B cell (primary cell): ENCODE measurements at regions of chr1 and their contacts with region 1.

Region 1: GRCh38 chr1:114282751-114283403 is 129.2 kb upstream of the SYT6 start:
- DNase-seq: peak; percentile 76
- ATAC-seq: peak; percentile 71
- H3K4me3 ChIP-seq: no peak overlapping the region
- H3K4me3 Mint-ChIP-seq: no peak overlapping the region
- H3K27ac ChIP-seq: no peak overlapping the region
- H3K27ac Mint-ChIP-seq: no peak overlapping the region
- H3K4me1 ChIP-seq: no peaks in the 10 kb centered on the region
- H3K4me1 Mint-ChIP-seq: no peaks in the 10 kb centered on the region
- H3K27me3 ChIP-seq: peaks cover 0 to 2% (median 0%) of the 10 kb centered on the region in 4 experiments
- H3K27me3 Mint-ChIP-seq: no peaks in the 10 kb centered on the region
- CTCF ChIP-seq: peak; percentile 91

Region 2: DNA sequence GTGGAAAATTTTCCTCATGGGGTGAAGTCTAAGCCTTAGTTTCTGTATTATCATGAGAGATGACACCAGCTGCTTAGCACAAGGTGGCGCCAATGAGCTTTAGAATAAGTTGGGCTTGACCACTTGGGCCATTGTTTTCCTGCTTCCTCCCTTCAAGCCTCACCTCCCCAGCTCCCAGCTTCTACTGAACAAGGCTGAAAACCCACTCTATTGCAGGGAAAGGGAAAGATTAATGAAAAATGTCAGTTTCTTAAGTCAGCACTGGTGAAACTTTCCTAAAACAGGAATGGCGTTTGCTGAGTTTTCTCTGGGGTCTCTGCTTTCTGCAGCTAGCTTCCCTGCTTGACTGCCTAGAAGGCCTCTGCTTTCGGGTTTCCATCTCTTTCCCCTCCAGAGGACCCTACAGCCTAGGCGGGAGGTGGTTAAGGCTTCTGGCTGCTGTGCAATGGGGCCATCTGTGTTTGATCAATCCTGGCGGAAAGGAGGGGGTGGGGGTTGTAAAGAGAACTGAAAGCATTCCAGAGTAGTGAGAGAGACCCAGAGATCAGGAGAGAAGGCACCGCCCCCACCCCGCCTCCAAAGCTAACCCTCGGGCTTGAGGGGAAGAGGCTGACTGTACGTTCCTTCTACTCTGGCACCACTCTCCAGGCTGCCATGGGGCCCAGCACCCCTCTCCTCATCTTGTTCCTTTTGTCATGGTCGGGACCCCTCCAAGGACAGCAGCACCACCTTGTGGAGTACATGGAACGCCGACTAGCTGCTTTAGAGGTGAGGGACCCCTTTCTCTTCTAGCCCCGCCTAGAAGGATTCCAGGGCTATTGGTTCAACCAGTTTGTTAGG is 303.8 kb before region 1 on chr1 and contains the start of gene OLFML3:
- CTCF ChIA-PET with region 1: interaction called, 37 read pairs
- POLR2A ChIA-PET with region 1: no interaction called
- intact Hi-C with region 1: no loop called
- DNase-seq: peak; percentile 54
- ATAC-seq: no peak
- H3K4me3 ChIP-seq: no peak within 1 kb of the TSS
- H3K4me3 Mint-ChIP-seq: no peak within 1 kb of the TSS
- H3K27ac ChIP-seq: no peak within 1 kb of the TSS
- H3K27ac Mint-ChIP-seq: no peak within 1 kb of the TSS
- H3K4me1 ChIP-seq: no peaks in the 10 kb centered on the region
- H3K4me1 Mint-ChIP-seq: peaks cover 11% of the 10 kb centered on the region
- H3K27me3 ChIP-seq: no peaks in the 10 kb centered on the region
- H3K27me3 Mint-ChIP-seq: no peaks in the 10 kb centered on the region
- CTCF ChIP-seq: peak; percentile 60
- total RNA-seq, gene OLFML3: 0.32 and 0.61 TPM in 2 replicates

Region 3: DNA sequence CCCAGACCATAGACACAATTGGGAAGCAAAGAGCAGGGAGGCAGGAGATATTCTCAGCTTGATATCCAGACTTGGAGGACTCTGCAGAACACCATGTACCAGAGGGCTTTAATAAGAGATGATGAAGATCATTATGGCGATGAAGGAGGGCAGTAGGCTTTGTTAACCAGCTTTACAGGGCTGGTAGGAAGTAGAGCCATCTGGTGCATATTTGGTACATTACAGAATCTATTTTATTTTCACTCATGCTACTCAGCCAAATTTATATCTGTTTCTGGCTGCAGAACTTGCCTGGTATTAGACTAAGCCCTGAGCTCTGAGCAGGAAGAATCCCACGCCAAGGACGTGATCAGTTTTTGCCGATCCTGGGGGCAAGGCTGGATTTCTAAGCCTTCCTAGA is 67.4 kb before region 1 on chr1:
- CTCF ChIA-PET with region 1: no interaction called
- POLR2A ChIA-PET with region 1: no interaction called
- intact Hi-C with region 1: no loop called
- DNase-seq: no peak
- ATAC-seq: no peak
- H3K4me3 ChIP-seq: no peak overlapping the region
- H3K4me3 Mint-ChIP-seq: no peak overlapping the region
- H3K27ac ChIP-seq: no peak overlapping the region
- H3K27ac Mint-ChIP-seq: no peak overlapping the region
- H3K4me1 ChIP-seq: no peaks in the 10 kb centered on the region
- H3K4me1 Mint-ChIP-seq: peaks cover 2% of the 10 kb centered on the region
- H3K27me3 ChIP-seq: peaks cover 0 to 2% (median under 1%) of the 10 kb centered on the region in 4 experiments
- H3K27me3 Mint-ChIP-seq: peaks cover 36% of the 10 kb centered on the region
- CTCF ChIP-seq: no peak

Region 4: GRCh38 chr1:114270282-114270681 is 12.6 kb before region 1 on chr1:
- CTCF ChIA-PET with region 1: interaction called, 48 read pairs
- POLR2A ChIA-PET with region 1: no interaction called
- intact Hi-C with region 1: no loop called
- DNase-seq: no peak
- ATAC-seq: no peak
- H3K4me3 ChIP-seq: no peak overlapping the region
- H3K4me3 Mint-ChIP-seq: no peak overlapping the region
- H3K27ac ChIP-seq: no peak overlapping the region
- H3K27ac Mint-ChIP-seq: no peak overlapping the region
- H3K4me1 ChIP-seq: no peaks in the 10 kb centered on the region
- H3K4me1 Mint-ChIP-seq: no peaks in the 10 kb centered on the region
- H3K27me3 ChIP-seq: peaks cover 0 to 3% (median 1%) of the 10 kb centered on the region in 4 experiments
- H3K27me3 Mint-ChIP-seq: peaks cover 32% of the 10 kb centered on the region
- CTCF ChIP-seq: no peak

Region 5: DNA sequence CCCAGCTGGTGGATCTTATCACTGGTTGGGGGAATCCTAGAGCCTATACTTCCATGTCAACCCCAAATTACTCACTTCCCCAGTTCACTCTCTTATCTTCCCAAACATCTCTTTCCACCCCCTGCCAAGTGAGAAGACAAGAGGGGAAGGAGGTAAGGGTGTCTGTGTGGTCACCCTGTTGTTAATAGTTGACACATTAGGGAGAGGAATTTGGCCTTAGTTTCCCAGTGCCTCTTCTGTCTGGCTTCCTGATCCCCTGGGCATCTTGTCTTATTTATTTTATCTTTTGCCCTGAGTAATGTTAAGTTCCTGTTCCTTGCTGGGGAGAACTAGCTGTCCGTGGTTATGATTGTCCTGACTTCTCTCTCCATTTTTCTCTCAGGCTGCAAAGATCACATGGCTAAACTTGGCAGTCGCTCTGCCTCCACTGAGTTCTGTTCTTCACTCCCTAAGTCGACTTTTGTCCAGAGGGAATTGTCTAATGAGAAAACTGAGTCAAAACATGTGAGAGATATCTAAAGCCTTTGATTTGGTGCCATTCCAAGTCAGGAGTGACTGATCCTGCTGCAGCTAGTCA is 27.9 kb after region 1 on chr1:
- CTCF ChIA-PET with region 1: no interaction called
- POLR2A ChIA-PET with region 1: no interaction called
- intact Hi-C with region 1: no loop called
- DNase-seq: no peak
- ATAC-seq: no peak
- H3K4me3 ChIP-seq: no peak overlapping the region
- H3K4me3 Mint-ChIP-seq: no peak overlapping the region
- H3K27ac ChIP-seq: no peak overlapping the region
- H3K27ac Mint-ChIP-seq: no peak overlapping the region
- H3K4me1 ChIP-seq: no peaks in the 10 kb centered on the region
- H3K4me1 Mint-ChIP-seq: no peaks in the 10 kb centered on the region
- H3K27me3 ChIP-seq: peaks cover 0 to 3% (median 0%) of the 10 kb centered on the region in 4 experiments
- H3K27me3 Mint-ChIP-seq: peaks cover 13% of the 10 kb centered on the region
- CTCF ChIP-seq: no peak